CD4-positive, alpha-beta memory T cell (primary cell): ENCODE measurements at regions of chr11 and their contacts with region 1.

Region 1: DNA sequence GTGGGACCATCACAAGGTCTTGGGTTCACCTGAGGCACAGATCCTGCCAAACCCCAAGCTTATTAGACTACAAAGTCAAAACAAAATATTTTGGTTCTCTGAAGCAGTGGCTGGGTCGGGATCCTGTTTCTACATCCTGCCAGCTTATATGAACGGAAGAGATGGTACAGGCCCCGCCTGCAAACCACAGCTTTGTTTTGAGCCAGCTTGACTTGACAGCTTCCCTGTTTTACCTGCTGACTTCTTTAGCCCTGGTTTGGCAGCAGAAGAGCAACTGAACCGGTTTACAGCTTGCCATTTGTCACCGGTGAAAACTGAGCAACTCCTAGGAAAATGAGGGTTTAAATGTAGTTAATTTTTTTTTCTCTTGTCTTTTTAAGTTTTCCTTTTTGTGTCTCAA is 11.4 kb downstream of the PACS1 start:
- DNase-seq: peak; percentile 79 to 93 (median 83)
- H3K4me3 ChIP-seq: peak overlapping the region in 1 of 2 donors; percentile 35
- H3K4me3 Mint-ChIP-seq: peak overlapping the region; percentile 88 to 98 (median 90)
- H3K27ac ChIP-seq: peak overlapping the region; percentile 66
- H3K27ac Mint-ChIP-seq: peak overlapping the region; percentile 93 to 100 (median 99)
- H3K4me1 ChIP-seq: peaks cover 94% of the 10 kb centered on the region
- H3K4me1 Mint-ChIP-seq: peaks cover 65 to 92% (median 81%) of the 10 kb centered on the region in 4 donors
- H3K27me3 ChIP-seq: no peaks in the 10 kb centered on the region
- H3K27me3 Mint-ChIP-seq: no peaks in the 10 kb centered on the region

Region 2: GRCh38 chr11:65961902-65962564 is 119.5 kb before region 1 on chr11:
- CTCF ChIA-PET with region 1: no interaction called
- POLR2A ChIA-PET with region 1: no interaction called
- intact Hi-C with region 1: no loop called
- DNase-seq: peak in 1 of 5 donors; percentile 76
- H3K4me3 ChIP-seq: peak overlapping the region; percentile 70 to 79
- H3K4me3 Mint-ChIP-seq: peak overlapping the region; percentile 80 to 99 (median 98)
- H3K27ac ChIP-seq: peak overlapping the region; percentile 96
- H3K27ac Mint-ChIP-seq: peak overlapping the region; percentile 92 to 100 (median 99)
- H3K4me1 ChIP-seq: peaks cover 35% of the 10 kb centered on the region
- H3K4me1 Mint-ChIP-seq: peaks cover 26 to 55% (median 32%) of the 10 kb centered on the region in 4 donors
- H3K27me3 ChIP-seq: no peaks in the 10 kb centered on the region
- H3K27me3 Mint-ChIP-seq: no peaks in the 10 kb centered on the region

Region 3: GRCh38 chr11:65973439-65974110 is 107.9 kb before region 1 on chr11:
- CTCF ChIA-PET with region 1: no interaction called
- POLR2A ChIA-PET with region 1: no interaction called
- intact Hi-C with region 1: no loop called
- DNase-seq: no peak
- H3K4me3 ChIP-seq: no peak overlapping the region
- H3K4me3 Mint-ChIP-seq: no peak overlapping the region
- H3K27ac ChIP-seq: no peak overlapping the region
- H3K27ac Mint-ChIP-seq: no peak overlapping the region
- H3K4me1 ChIP-seq: no peaks in the 10 kb centered on the region
- H3K4me1 Mint-ChIP-seq: peaks cover 0 to 12% (median 6%) of the 10 kb centered on the region in 4 donors
- H3K27me3 ChIP-seq: no peaks in the 10 kb centered on the region
- H3K27me3 Mint-ChIP-seq: no peaks in the 10 kb centered on the region

Region 4: GRCh38 chr11:66100272-66101065 is 19.0 kb after region 1 on chr11:
- CTCF ChIA-PET with region 1: interaction called, 12 read pairs
- POLR2A ChIA-PET with region 1: interaction called, 60 read pairs
- intact Hi-C with region 1: loop called (anchors 1 kb)
- DNase-seq: peak; percentile 72 to 89 (median 80)
- H3K4me3 ChIP-seq: peak overlapping the region; percentile 32 to 46
- H3K4me3 Mint-ChIP-seq: peak overlapping the region; percentile 75 to 87 (median 80)
- H3K27ac ChIP-seq: peak overlapping the region; percentile 57
- H3K27ac Mint-ChIP-seq: peak overlapping the region; percentile 76 to 98 (median 96)
- H3K4me1 ChIP-seq: peaks cover 76% of the 10 kb centered on the region
- H3K4me1 Mint-ChIP-seq: peaks cover 51 to 79% (median 60%) of the 10 kb centered on the region in 4 donors
- H3K27me3 ChIP-seq: no peaks in the 10 kb centered on the region
- H3K27me3 Mint-ChIP-seq: no peaks in the 10 kb centered on the region

Region 5: DNA sequence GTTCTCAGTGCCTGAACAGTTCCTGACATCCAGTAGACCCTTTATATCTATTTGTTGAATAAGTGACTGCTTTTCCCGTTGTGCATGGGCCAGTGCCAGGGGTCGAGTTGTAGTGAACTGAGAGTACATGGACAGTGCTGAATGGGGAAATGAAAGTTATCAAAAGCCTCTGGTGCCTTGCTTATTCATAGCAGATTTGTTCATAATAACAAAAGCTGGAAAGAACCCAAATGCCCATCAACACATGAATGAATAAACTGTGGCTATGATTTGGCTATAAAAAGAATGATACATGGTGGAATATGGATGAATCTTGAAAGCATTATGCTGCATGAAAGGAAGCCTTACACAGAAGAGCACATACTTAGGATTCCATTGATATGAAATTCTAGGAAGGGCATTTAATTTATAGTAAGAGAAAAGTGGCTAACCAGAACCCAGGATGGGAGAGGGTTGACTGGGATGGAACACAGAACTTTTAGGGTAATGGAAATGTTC is 31.1 kb after region 1 on chr11:
- CTCF ChIA-PET with region 1: interaction called, 231 read pairs
- POLR2A ChIA-PET with region 1: interaction called, 185 read pairs
- intact Hi-C with region 1: loop called (anchors 5 kb)
- DNase-seq: no peak
- H3K4me3 ChIP-seq: no peak overlapping the region
- H3K4me3 Mint-ChIP-seq: peak overlapping the region in 7 of 8 donors; percentile 14 to 84 (median 65)
- H3K27ac ChIP-seq: peak overlapping the region; percentile 49
- H3K27ac Mint-ChIP-seq: peak overlapping the region; percentile 77 to 96 (median 90)
- H3K4me1 ChIP-seq: peaks cover 99% of the 10 kb centered on the region
- H3K4me1 Mint-ChIP-seq: peaks cover 69 to 97% (median 79%) of the 10 kb centered on the region in 4 donors
- H3K27me3 ChIP-seq: no peaks in the 10 kb centered on the region
- H3K27me3 Mint-ChIP-seq: no peaks in the 10 kb centered on the region

Region 6: GRCh38 chr11:66126808-66127555 is 45.5 kb after region 1 on chr11:
- CTCF ChIA-PET with region 1: interaction called, 231 read pairs
- POLR2A ChIA-PET with region 1: interaction called, 185 read pairs
- intact Hi-C with region 1: loop called (anchors 2 kb)
- DNase-seq: peak; percentile 57 to 80 (median 64)
- H3K4me3 ChIP-seq: peak overlapping the region; percentile 2 to 14
- H3K4me3 Mint-ChIP-seq: peak overlapping the region; percentile 53 to 90 (median 78)
- H3K27ac ChIP-seq: peak overlapping the region; percentile 49
- H3K27ac Mint-ChIP-seq: peak overlapping the region; percentile 92 to 98 (median 95)
- H3K4me1 ChIP-seq: peaks cover 74% of the 10 kb centered on the region
- H3K4me1 Mint-ChIP-seq: peaks cover 65 to 81% (median 72%) of the 10 kb centered on the region in 4 donors
- H3K27me3 ChIP-seq: no peaks in the 10 kb centered on the region
- H3K27me3 Mint-ChIP-seq: no peaks in the 10 kb centered on the region

Region 7: DNA sequence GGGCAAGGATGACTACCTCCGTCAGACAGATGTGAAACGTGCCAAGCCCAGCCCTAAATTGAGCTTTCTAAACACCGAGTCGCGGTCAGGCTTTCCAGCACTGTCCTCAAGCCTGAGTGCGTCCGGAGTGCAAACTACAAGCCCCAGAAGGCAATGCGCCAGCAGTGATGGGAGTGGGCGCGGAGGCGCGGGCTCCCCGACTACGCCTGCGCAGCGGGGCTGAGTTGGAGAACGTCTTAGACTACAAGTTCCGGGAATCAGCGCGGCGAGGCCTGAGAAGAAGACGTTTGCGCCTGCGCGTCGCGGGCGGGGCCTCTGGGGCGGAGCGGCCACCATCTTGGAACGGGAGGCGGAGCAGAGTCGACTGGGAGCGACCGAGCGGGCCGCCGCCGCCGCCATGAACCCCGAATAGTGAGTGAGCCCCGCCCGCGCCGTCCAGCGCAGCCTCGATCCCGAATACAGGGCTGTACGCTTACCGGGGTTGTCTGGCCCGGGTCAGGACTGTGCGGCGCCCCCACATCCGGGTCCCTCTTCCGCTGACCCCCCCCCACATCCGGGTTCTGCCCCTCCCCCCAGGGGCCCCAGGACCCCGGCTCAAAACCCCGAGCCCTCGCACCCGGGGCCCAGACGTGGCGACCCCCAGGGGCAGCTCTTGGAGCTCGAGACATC is 186.9 kb after region 1 on chr11 and contains the start of gene RAB1B:
- CTCF ChIA-PET with region 1: no interaction called
- POLR2A ChIA-PET with region 1: no interaction called
- intact Hi-C with region 1: no loop called
- DNase-seq: peak; percentile 99 to 100 (median 100)
- H3K4me3 ChIP-seq: peak within 1 kb of the TSS; percentile 62 to 84
- H3K4me3 Mint-ChIP-seq: peak within 1 kb of the TSS; percentile 92 to 99 (median 94)
- H3K27ac ChIP-seq: peak within 1 kb of the TSS; percentile 88
- H3K27ac Mint-ChIP-seq: peak within 1 kb of the TSS; percentile 94 to 100 (median 98)
- H3K4me1 ChIP-seq: peaks cover 48% of the 10 kb centered on the region
- H3K4me1 Mint-ChIP-seq: peaks cover 23 to 57% (median 39%) of the 10 kb centered on the region in 4 donors
- H3K27me3 ChIP-seq: no peaks in the 10 kb centered on the region
- H3K27me3 Mint-ChIP-seq: no peaks in the 10 kb centered on the region
- total RNA-seq, gene RAB1B: 76.4 to 79.4 TPM